ENCODE measurements at regions of chr5 and their contacts with region 1.

Region 1: DNA sequence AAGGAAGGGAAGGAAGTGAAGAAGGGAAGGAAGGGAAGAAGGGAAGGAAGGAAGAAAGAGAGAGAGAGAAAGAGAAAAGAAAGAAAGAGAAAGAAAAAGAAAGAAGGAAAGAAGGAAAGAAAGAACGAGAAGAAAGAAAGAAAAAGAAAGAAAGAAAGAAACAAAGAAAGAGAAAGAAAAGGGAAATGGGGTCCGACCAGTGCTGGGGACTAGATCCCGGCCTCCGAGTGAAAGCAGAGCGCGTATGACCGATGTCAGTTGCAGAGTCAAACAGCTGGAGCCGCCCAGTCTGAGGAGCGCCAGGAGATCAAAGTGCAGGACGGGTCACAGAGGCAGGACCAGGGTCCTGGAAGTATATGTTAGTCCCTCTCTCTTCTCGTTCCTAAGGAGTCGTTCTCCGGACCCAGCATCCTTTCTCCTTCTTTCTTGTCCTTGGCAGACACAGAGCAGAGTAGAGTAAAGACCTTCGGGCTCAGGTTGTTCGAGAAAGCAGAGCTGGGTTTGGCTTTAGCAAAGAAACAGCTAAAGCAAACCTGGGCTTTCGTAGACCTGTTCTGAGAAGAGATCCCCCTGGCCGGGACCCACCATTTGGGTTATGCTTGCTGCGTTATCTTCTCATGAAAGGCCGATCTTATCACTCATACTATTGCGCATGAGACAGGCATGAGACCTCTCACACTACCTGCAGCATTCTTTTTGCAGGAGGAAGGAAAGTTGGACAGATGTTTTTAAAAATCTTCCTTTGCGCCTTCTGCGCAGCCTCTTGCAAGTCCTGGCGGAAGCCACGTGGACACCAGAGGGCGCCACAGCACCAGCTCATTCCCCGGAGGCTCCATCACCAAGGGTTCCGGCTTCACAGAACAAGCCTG is 305.2 kb upstream of the MSX2 start:
- DNase-seq: peak; percentile 88
- ATAC-seq: peak; percentile 90

Region 2: GRCh38 chr5:174327317-174328236 is 91.6 kb before region 1 on chr5:
- intact Hi-C with region 1: loop called (anchors 5 kb)
- DNase-seq: peak; percentile 80
- ATAC-seq: peak; percentile 42

Region 3: GRCh38 chr5:174735498-174736330 is 316.6 kb after region 1 on chr5:
- intact Hi-C with region 1: loop called (anchors 5 kb)
- DNase-seq: no peak
- ATAC-seq: no peak

Region 4: DNA sequence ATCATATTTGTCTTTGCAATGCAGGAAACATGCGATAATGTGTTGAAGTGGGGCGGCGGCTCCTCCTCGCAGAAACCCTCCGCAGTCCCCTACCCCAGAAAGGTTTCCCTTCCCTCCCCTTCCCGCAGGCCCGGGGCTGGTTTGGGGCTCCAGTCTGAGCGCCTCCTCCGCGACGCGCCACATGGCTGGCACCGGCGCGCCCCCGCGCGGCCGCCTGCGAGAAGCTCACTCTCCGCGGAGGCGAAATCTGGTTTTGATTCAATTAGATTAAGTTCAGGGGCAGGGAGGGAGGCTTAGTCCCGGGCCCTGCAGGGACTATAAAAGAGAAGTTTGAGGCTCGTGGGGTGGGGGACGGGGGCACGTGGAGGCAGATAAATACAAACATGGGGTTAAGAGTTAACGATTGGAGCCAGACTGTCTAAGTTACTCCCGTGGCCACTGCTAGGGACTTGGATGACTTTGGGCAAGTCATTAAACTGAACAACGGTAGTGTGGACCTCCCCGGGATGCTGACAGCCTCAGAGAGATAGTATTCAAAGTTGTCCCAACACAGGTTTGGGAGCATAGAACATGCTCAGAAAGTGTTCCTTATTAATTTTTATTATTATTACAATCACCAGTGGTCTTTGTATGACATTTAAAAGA is 374.6 kb after region 1 on chr5:
- intact Hi-C with region 1: loop called (anchors 1 kb)
- DNase-seq: peak; percentile 67
- ATAC-seq: peak; percentile 50

Region 5: GRCh38 chr5:175464074-175464941 is 1045.1 kb after region 1 on chr5:
- intact Hi-C with region 1: loop called (anchors 10 kb)
- DNase-seq: no peak
- ATAC-seq: no peak